GM12878 (cell line): ENCODE measurements at regions of chr5 and their contacts with region 1.

Region 1: DNA sequence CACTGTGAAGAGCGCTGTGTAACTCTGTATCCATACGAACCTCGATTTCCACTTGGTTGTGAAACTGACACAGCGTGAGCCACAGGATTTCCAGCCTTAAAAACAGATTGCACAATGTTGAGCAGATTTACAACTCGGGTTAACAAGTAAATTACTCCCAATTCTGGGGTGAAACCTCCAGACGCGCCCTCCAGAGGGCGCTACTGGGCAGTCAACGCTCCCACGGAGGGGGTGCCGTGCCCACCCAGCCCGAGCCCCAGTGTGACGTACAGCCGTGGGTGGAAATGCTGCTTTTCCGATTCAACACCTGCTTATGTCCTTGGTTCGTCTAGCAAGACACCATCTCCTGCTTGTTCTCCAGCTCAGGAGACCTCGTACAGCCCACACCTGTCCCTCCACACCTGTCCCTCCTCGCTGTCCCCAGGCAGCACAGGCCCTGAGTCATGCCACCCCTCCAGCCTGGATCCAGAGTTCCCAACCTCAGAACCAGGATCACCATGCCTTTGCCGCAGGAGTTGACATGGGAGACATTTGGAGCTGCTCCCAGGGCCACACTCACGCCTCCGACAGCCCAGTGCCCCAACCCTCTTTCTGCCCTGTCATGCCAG is 34.4 kb upstream of the SLC6A3 start:
- DNase-seq: no peak
- ATAC-seq: peak; percentile 35
- H3K4me3 ChIP-seq: no peak overlapping the region
- H3K27ac ChIP-seq: peak overlapping the region; percentile 5; the same call in 1 of the 2 replicates
- H3K4me1 ChIP-seq: peaks cover 25% of the 10 kb centered on the region
- H3K27me3 ChIP-seq: no peaks in the 10 kb centered on the region
- CTCF ChIP-seq: peak; percentile 77 to 82 (median 78)
- EP300 ChIP-seq: no peak
- POLR2A ChIP-seq: peak; percentile 41; the same call in 1 of the 2 replicates
- RAD21 ChIP-seq: peak; percentile 80

Region 2: DNA sequence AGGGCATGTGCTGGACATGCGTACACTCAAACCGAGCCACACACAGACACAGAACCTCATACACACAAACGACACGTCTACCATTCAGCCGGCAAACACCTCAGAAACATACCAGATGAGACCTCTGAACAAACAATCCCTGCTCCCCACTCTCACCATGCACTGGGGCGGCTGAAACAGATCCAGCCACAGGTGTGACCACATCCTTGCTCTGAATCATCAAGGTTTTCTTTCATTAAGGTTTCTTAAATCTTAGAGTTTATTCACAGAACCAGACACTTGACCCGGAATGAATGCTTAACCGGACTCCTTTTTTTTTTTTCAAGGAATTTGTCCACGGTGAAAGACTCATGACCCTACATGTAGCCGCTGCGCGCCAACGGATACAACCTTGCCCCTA is 211.0 kb before region 1 on chr5:
- CTCF ChIA-PET with region 1: no interaction called
- POLR2A ChIA-PET with region 1: no interaction called
- RAD21 ChIA-PET with region 1: no interaction called
- SMC1A ChIA-PET with region 1: no interaction called
- in situ Hi-C with region 1: no loop called
- intact Hi-C with region 1: no loop called
- DNase-seq: no peak
- ATAC-seq: peak; percentile 53
- H3K4me3 ChIP-seq: no peak overlapping the region
- H3K27ac ChIP-seq: no peak overlapping the region
- H3K4me1 ChIP-seq: peaks cover 3% of the 10 kb centered on the region; the same call in 1 of the 2 replicates
- H3K27me3 ChIP-seq: no peaks in the 10 kb centered on the region
- CTCF ChIP-seq: no peak
- EP300 ChIP-seq: no peak
- POLR2A ChIP-seq: no peak
- RAD21 ChIP-seq: no peak

Region 3: GRCh38 chr5:1503241-1504068 is 23.8 kb after region 1 on chr5:
- CTCF ChIA-PET with region 1: interaction called, 37 read pairs
- POLR2A ChIA-PET with region 1: interaction called, 108 read pairs
- RAD21 ChIA-PET with region 1: interaction called, 33 read pairs
- SMC1A ChIA-PET with region 1: interaction called, 93 read pairs
- in situ Hi-C with region 1: no loop called
- intact Hi-C with region 1: no loop called
- DNase-seq: no peak
- ATAC-seq: peak; percentile 42
- H3K4me3 ChIP-seq: peak overlapping the region; percentile 55
- H3K27ac ChIP-seq: peak overlapping the region; percentile 93
- H3K4me1 ChIP-seq: peaks cover 81% of the 10 kb centered on the region
- H3K27me3 ChIP-seq: no peaks in the 10 kb centered on the region
- CTCF ChIP-seq: no peak
- EP300 ChIP-seq: no peak
- POLR2A ChIP-seq: no peak
- RAD21 ChIP-seq: no peak

Region 4: GRCh38 chr5:1564182-1564748 is 84.6 kb after region 1 on chr5:
- CTCF ChIA-PET with region 1: no interaction called
- POLR2A ChIA-PET with region 1: no interaction called
- RAD21 ChIA-PET with region 1: no interaction called
- SMC1A ChIA-PET with region 1: no interaction called
- in situ Hi-C with region 1: no loop called
- intact Hi-C with region 1: no loop called
- DNase-seq: no peak
- ATAC-seq: peak; percentile 21; the same call in 1 of the 3 replicates
- H3K4me3 ChIP-seq: no peak overlapping the region
- H3K27ac ChIP-seq: no peak overlapping the region
- H3K4me1 ChIP-seq: no peaks in the 10 kb centered on the region
- H3K27me3 ChIP-seq: no peaks in the 10 kb centered on the region
- CTCF ChIP-seq: no peak
- EP300 ChIP-seq: no peak
- POLR2A ChIP-seq: no peak
- RAD21 ChIP-seq: no peak

Region 5: DNA sequence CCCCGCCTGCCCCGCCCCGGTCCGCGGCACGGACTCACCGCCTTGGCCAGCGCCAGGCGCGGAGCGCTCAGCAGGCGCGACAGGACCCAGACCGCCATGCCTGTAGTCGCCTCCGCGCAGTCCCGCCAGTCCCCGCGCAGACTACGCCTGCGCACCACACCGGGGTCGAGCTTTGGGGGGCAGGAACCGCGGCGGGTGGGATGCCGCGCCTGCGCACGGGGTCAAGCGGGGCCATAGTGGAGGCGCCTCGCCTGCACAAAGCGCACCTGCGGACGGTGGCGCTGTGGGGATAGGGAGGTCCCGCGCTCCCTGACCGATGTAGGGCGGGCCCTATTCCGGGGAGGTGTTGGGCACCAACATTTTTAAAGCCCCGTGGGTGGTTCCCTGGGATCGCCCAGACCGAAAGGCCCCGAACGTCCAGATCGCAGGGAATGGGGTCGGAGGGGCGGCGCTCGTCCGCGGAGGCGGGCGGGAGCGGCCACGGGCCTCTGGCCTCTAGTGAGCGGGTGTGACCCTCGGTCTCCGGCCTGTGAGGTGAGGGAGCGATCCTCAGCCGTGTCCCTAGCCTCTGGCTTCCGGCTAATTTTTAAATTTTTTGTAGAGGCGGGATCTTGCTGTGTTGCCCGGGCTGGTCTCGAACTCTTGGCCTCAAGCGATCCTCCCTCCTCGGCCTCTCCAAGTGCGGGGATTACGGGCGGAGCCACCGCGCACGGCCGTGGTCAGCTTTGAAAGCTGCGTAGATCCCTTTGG is 114.8 kb after region 1 on chr5:
- CTCF ChIA-PET with region 1: interaction called, 11 read pairs
- POLR2A ChIA-PET with region 1: no interaction called
- RAD21 ChIA-PET with region 1: interaction called, 4 read pairs
- SMC1A ChIA-PET with region 1: no interaction called
- in situ Hi-C with region 1: no loop called
- intact Hi-C with region 1: no loop called
- DNase-seq: peak; percentile 70
- ATAC-seq: peak; percentile 97
- H3K4me3 ChIP-seq: peak overlapping the region; percentile 95
- H3K27ac ChIP-seq: peak overlapping the region; percentile 41
- H3K4me1 ChIP-seq: no peaks in the 10 kb centered on the region
- H3K27me3 ChIP-seq: no peaks in the 10 kb centered on the region
- CTCF ChIP-seq: peak; percentile 64 to 79 (median 78)
- EP300 ChIP-seq: no peak
- POLR2A ChIP-seq: peak; percentile 89
- RAD21 ChIP-seq: peak; percentile 40